ENCODE measurements at regions of chr2 and their contacts with region 1.

Region 1: DNA sequence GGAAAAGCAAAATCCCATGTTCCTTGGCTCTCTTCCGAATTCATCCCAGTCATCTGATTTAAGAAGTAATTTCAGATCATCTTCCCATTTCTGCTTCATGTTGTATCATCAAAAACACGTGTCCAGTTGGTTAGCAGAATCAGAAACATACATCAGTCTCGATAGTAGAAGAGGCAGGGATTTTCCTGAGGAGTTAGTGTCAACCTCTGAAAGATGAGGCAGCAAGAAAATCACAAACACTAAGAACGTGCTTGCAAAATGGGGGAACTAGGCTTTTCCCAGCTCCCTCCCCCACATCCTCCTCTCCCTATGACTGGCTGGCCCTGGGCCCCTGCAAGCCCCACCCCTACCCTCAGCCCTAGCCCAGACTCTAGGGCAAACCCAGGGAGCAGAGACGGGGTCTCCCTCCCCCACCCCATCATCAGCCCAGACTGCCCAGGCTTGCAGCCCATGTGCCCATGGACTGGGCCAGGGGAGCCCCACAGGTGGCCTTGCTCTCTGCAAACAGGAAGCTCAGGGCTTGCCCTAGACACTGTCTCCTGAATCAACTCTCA is 161.0 kb upstream of the ID2 start:
- DNase-seq: no peak
- H3K4me3 Mint-ChIP-seq: no peak overlapping the region
- H3K27ac Mint-ChIP-seq: no peak overlapping the region
- H3K4me1 Mint-ChIP-seq: peaks cover 69% of the 10 kb centered on the region
- H3K27me3 Mint-ChIP-seq: no peaks in the 10 kb centered on the region

Region 2: GRCh38 chr2:8534729-8535468 is 14.0 kb after region 1 on chr2:
- CTCF ChIA-PET with region 1: interaction called, 22 read pairs
- POLR2A ChIA-PET with region 1: no interaction called
- DNase-seq: no peak
- H3K4me3 Mint-ChIP-seq: no peak overlapping the region
- H3K27ac Mint-ChIP-seq: no peak overlapping the region
- H3K4me1 Mint-ChIP-seq: peaks cover 28% of the 10 kb centered on the region
- H3K27me3 Mint-ChIP-seq: no peaks in the 10 kb centered on the region

Region 3: DNA sequence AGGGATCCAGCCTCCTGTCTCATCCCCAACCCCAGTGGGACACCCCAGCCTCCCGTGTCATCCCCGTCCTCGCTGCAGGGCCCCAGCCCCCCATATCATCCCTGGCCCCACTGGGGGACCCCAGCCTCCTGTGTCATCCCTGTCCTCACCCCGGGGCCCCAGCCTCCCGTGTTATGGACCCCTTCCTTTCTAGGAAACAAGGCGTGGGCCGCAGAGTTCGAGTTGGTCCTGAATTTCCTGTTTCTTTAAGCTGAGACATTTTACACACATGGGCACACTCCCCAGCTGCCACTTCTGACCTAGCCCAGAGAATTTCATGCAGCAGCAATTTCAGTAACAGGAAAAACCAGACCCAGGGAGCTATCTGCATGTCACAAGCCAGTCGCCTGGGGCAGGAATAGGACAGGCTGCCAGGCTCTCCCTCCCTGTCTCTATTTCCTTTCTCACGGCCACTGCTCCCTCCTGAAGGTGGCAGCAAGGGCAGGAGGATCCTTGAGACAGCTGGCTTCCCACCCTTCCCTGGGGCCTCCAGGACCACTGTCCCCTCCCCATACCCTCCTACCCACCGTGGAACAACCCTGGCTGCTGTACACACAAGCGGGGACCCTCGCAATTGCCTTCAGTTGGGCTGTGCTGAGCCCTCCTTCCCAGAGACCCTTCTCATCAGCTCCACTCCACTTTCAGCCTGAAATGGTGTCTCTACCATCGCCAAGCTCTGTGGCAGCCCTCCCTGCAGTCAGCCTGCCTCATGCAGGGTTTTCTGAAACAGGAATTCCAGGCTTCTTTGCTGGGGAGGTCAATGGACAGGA is 19.1 kb after region 1 on chr2:
- CTCF ChIA-PET with region 1: interaction called, 21 read pairs
- POLR2A ChIA-PET with region 1: no interaction called
- DNase-seq: no peak
- H3K4me3 Mint-ChIP-seq: no peak overlapping the region
- H3K27ac Mint-ChIP-seq: peak overlapping the region; percentile 83
- H3K4me1 Mint-ChIP-seq: peaks cover 78% of the 10 kb centered on the region
- H3K27me3 Mint-ChIP-seq: no peaks in the 10 kb centered on the region

Measured in activated CD4-positive, alpha-beta T cell treated with anti-CD3 and anti-CD28 coated beads, Interleukin-2, amount 10 ng/mL, durations not matched to agents 7 days and 5 days (primary cell).